ENCODE measurements at regions of chr7 and their contacts with region 1.

Region 1: GRCh38 chr7:132654150-132654549 is 77.9 kb upstream of the PLXNA4 start:
- DNase-seq: peak in 4 of 9 donors; percentile 23 to 32 (median 26)
- ATAC-seq: peak; percentile 48
- H3K4me3 ChIP-seq: no peak overlapping the region
- H3K4me3 Mint-ChIP-seq: peak overlapping the region in 8 of 10 donors; percentile 44 to 75 (median 54)
- H3K27ac ChIP-seq: no peak overlapping the region
- H3K27ac Mint-ChIP-seq: peak overlapping the region in 5 of 9 donors; percentile 6 to 92 (median 84)
- H3K4me1 ChIP-seq: peaks cover 14 to 21% of the 10 kb centered on the region in 2 donors
- H3K4me1 Mint-ChIP-seq: peaks cover 19 to 57% (median 45%) of the 10 kb centered on the region in 7 donors
- H3K27me3 ChIP-seq: no peaks in the 10 kb centered on the region
- H3K27me3 Mint-ChIP-seq: no peaks in the 10 kb centered on the region

Region 2: GRCh38 chr7:132666071-132666774 is 12.1 kb after region 1 on chr7:
- CTCF ChIA-PET with region 1: interaction called, 3 read pairs
- POLR2A ChIA-PET with region 1: interaction called, 3 read pairs
- intact Hi-C with region 1: loop called in 1 of 2 experiments (anchors 1 kb)
- DNase-seq: peak in 6 of 9 donors; percentile 12 to 56 (median 38)
- ATAC-seq: peak; percentile 69
- H3K4me3 ChIP-seq: peak overlapping the region; percentile 25
- H3K4me3 Mint-ChIP-seq: peak overlapping the region in 9 of 10 donors; percentile 48 to 82 (median 66)
- H3K27ac ChIP-seq: no peak overlapping the region
- H3K27ac Mint-ChIP-seq: peak overlapping the region; percentile 77 to 96 (median 84)
- H3K4me1 ChIP-seq: peaks cover 7 to 15% of the 10 kb centered on the region in 2 donors
- H3K4me1 Mint-ChIP-seq: peaks cover 10 to 19% (median 16%) of the 10 kb centered on the region in 7 donors
- H3K27me3 ChIP-seq: no peaks in the 10 kb centered on the region
- H3K27me3 Mint-ChIP-seq: no peaks in the 10 kb centered on the region

Region 3: DNA sequence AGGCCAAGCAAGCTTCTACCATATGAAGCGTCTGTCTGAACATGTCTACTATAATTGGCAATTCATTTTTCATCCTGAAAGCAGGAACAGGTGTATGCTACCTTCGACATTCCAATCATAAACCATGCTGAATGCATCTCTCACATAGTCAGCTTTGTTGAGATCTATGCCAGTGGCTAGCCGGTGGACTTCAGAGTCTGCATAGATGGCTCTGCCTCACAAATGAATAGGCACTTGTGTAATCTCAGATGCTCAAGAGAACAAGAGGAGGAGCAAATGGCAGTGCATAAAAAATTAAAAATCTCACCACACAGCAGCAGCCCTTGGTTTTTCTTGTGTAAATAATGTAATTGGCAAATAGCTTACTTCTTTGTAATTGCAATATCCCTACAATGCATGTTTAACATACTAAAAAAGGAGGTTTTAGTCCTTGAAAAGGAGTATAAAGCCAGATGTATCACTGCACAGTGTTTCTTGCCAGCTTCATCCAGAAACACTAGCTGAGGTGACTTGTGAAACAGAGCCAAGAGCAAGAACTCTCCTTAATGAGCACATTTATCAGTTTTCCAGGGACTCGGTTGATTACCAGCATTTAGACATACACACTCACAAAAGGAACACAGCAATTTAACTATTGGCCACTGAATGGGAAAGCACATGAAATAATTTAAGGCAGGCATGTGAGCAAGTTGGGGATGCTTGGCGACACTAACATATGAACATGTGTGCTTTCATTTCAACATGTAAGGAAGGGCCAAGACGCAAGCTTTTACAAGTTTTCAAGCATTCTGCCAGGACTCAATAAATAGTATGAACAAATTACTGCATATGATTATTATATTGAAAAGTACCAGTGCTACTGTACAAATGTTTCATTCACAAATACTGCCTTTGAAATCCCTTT is 172.0 kb after region 1 on chr7:
- CTCF ChIA-PET with region 1: no interaction called
- POLR2A ChIA-PET with region 1: no interaction called
- intact Hi-C with region 1: no loop called
- DNase-seq: no peak
- ATAC-seq: no peak
- H3K4me3 ChIP-seq: no peak overlapping the region
- H3K4me3 Mint-ChIP-seq: no peak overlapping the region
- H3K27ac ChIP-seq: no peak overlapping the region
- H3K27ac Mint-ChIP-seq: no peak overlapping the region
- H3K4me1 ChIP-seq: no peaks in the 10 kb centered on the region
- H3K4me1 Mint-ChIP-seq: peaks cover 11 to 36% (median 21%) of the 10 kb centered on the region in 7 donors
- H3K27me3 ChIP-seq: no peaks in the 10 kb centered on the region
- H3K27me3 Mint-ChIP-seq: no peaks in the 10 kb centered on the region